ENCODE measurements at regions of chr9 and their contacts with region 1.

Region 1: DNA sequence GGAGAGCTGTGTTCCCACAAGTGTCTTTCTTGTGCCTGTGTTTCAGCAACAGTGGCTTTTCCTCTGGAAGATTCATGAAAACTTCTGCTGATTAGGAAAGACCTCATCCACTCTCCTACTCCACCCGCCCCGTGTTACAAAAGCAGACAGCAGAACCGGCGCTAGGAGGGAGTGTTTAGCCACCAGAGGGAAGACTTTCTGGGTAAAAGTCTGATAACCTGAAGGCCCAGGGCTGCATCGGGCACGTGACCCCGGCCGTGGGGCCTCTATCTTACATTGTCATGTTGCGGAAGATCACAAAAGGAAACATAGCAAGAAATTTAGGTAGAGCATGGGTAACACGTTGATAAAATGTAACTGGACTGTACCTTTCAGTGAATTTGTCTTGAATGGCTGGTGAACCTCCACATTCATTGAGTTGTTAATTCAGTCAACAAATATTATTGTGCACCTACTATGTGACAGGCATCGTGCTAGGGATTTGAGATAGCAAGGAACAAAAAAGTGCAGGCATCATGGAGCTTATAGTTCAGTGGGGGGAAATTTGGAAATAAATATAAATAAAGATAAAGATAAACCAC is 31.9 kb upstream of the DMRT2 start:
- DNase-seq: no peak
- ATAC-seq: peak in 2 of 8 donors; percentile 28 to 59
- H3K4me3 ChIP-seq: no peak overlapping the region
- H3K27ac ChIP-seq: no peak overlapping the region
- H3K4me1 ChIP-seq: no peaks in the 10 kb centered on the region
- H3K27me3 ChIP-seq: peaks cover 0 to 60% (median 44%) of the 10 kb centered on the region in 7 donors
- CTCF ChIP-seq: peak in 6 of 9 donors; percentile 24 to 45 (median 34)

Region 2: DNA sequence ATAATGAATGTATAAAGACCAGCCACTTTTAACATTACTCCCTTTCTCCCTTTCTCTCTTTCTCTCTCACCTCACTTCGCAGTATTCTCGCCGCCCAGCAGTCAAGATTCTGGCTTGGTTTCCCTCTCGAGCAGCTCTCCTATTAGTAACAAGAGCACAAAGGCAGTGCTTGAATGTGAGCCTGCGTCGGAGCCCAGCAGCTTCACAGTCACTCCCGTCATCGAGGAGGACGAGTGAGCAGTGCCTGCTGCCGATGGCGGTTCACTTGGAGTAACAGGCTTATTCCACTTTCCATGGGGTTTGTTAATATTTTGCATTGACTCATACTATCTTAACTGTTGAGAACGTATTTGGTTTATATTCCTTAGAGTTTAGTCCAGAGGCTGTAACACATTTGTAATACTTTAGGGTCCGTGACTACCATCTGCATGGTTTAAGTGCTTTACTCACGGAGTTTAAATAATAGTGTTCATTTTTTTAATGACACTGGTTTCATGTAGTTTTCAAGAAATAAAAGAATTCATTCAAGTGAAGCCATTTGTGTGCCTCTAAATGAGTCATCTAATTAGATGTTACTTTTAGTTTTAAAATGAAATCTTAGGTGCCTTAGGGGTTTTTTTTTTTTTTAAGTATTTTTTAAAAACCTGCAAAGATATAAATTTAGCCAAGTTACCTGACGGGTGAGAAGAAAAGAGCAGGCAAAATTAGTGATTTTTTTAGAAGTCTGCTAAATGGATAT is 50.1 kb before region 1 on chr9:
- intact Hi-C with region 1: no loop called
- DNase-seq: no peak
- ATAC-seq: no peak
- H3K4me3 ChIP-seq: no peak overlapping the region
- H3K27ac ChIP-seq: no peak overlapping the region
- H3K4me1 ChIP-seq: peaks cover 3 to 44% (median 32%) of the 10 kb centered on the region in 9 donors
- H3K27me3 ChIP-seq: peaks cover 48 to 100% (median 100%) of the 10 kb centered on the region in 7 donors
- CTCF ChIP-seq: no peak

Region 3: GRCh38 chr9:1071730-1072129 is 53.5 kb after region 1 on chr9:
- intact Hi-C with region 1: loop called in 1 of 10 experiments (anchors 10 kb)
- DNase-seq: no peak
- ATAC-seq: no peak
- H3K4me3 ChIP-seq: no peak overlapping the region
- H3K27ac ChIP-seq: no peak overlapping the region
- H3K4me1 ChIP-seq: no peaks in the 10 kb centered on the region
- H3K27me3 ChIP-seq: peaks cover 0 to 15% (median 10%) of the 10 kb centered on the region in 7 donors
- CTCF ChIP-seq: no peak

Region 4: DNA sequence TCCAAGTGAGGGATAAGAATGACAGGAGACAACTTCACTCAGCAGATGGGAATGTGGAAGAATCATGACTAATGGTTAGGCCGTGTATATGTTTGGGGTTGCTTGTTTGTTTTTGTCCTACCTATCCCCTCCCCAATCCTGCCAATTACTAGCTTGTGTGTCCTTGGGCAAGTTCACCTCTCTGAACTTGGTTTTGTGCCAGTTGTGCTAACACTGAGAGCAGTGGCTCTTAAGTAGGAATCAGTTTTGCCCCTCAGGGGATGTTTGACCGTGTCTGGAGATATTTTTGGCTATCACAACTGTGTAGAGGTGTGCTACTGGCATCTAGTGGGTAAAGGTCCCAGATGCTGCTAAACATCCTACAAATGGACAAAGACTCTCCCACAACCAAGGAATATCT is 318.9 kb after region 1 on chr9:
- intact Hi-C with region 1: loop called in 1 of 10 experiments (anchors 5 kb)
- DNase-seq: no peak
- ATAC-seq: peak in 1 of 8 donors; percentile 71
- H3K4me3 ChIP-seq: no peak overlapping the region
- H3K27ac ChIP-seq: no peak overlapping the region
- H3K4me1 ChIP-seq: no peaks in the 10 kb centered on the region
- H3K27me3 ChIP-seq: no peaks in the 10 kb centered on the region
- CTCF ChIP-seq: peak in 1 of 9 donors; percentile 15

Measured in heart right ventricle (tissue), 16 donors.